Testis (tissue), 5 donors: ENCODE measurements at regions of chr2 and their contacts with region 1.

Region 1: GRCh38 chr2:101151141-101151858 is at the start of gene TBC1D8:
- DNase-seq: peak; percentile 86
- H3K4me3 ChIP-seq: peak within 1 kb of the TSS; percentile 72 to 73
- H3K27ac ChIP-seq: peak within 1 kb of the TSS; percentile 47 to 83
- H3K4me1 ChIP-seq: peaks cover 28% of the 10 kb centered on the region
- H3K27me3 ChIP-seq: no peaks in the 10 kb centered on the region
- CTCF ChIP-seq: no peak
- POLR2A ChIP-seq: no peak
- total RNA-seq, gene TBC1D8: 90.1 to 125 TPM

Region 2: GRCh38 chr2:100291120-100291970 is 860.0 kb before region 1 on chr2:
- intact Hi-C with region 1: no loop called
- DNase-seq: peak; percentile 92
- H3K4me3 ChIP-seq: no peak overlapping the region
- H3K27ac ChIP-seq: peak overlapping the region; percentile 52 to 72
- H3K4me1 ChIP-seq: peaks cover 23% of the 10 kb centered on the region
- H3K27me3 ChIP-seq: no peaks in the 10 kb centered on the region
- CTCF ChIP-seq: no peak
- POLR2A ChIP-seq: no peak

Region 3: GRCh38 chr2:101036562-101037457 is 114.5 kb before region 1 on chr2:
- intact Hi-C with region 1: loop called (anchors 10 kb)
- DNase-seq: no peak
- H3K4me3 ChIP-seq: no peak overlapping the region
- H3K27ac ChIP-seq: no peak overlapping the region
- H3K4me1 ChIP-seq: no peaks in the 10 kb centered on the region
- H3K27me3 ChIP-seq: no peaks in the 10 kb centered on the region
- CTCF ChIP-seq: peak; percentile 25 to 57 (median 43)
- POLR2A ChIP-seq: no peak